Activated T-helper 1 cell treated with anti-CD3 and anti-CD28 coated beads, Interleukin-12 subunit alpha, Interleukin-12 subunit beta, Interleukin-2, Interleukin-4 antibody, amounts not matched to agents 30 ng/mL and 10 ng/mL and 1 ng/mL, durations not matched to agents 14 hours and 24 hours and 36 hours (primary cell): ENCODE measurements at regions of chr5 and their contacts with region 1.

Region 1: GRCh38 chr5:151223469-151224264 is at the start of gene CCDC69:
- DNase-seq: peak; percentile 43
- H3K4me3 Mint-ChIP-seq: peak within 1 kb of the TSS; percentile 77
- H3K27ac Mint-ChIP-seq: peak within 1 kb of the TSS; percentile 78
- H3K4me1 Mint-ChIP-seq: peaks cover 49% of the 10 kb centered on the region
- H3K27me3 Mint-ChIP-seq: no peaks in the 10 kb centered on the region
- total RNA-seq, gene CCDC69: 24.3 and 25.4 TPM in 2 replicates

Region 2: DNA sequence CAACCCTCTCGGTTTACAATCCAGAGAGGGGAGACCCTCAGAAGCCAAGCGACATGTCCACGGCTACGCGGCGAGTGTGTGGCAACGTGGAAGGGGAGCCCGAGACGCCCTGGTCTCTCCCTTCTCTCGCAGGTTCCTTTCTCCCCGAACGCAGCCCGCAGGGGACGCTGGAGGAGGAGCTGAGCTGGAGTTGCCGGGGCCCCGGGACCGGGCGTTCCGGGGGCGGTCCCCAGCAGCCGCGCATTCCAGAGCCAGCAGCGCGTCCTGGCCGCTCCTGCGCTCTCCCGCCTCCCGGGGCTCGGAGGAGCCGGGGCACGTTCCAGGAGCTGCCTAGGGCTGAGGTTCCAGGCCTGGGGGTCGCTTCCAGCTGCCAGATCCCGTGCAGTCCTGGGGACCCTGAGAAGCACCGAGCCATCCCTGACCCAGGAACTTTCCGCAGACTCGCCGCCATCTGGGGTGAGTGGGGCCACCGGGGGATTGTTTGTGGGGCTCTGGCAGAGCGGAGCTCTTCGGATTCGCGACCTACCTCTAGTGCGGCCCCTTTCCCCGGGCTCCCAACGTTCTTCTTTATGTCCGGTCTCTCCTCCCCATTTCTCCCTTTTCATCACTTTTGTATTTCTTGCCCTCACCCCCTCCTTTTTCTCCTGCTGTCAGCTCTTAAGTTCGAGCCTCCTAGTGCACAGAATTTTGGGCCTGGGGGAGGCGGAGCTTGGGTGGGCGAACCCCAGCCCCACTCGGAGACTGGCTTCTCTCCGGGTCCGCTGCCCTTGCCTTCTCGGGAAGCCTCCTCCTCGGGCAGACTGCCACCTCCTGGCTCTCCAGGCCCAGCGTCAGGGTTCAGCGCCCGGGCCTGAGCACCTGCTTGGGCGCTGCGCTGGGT is 444.9 kb before region 1 on chr5 and contains the start of gene SMIM3:
- intact Hi-C with region 1: no loop called
- DNase-seq: peak; percentile 53
- H3K4me3 Mint-ChIP-seq: peak within 1 kb of the TSS; percentile 100
- H3K27ac Mint-ChIP-seq: peak within 1 kb of the TSS; percentile 83
- H3K4me1 Mint-ChIP-seq: peaks cover 62% of the 10 kb centered on the region
- H3K27me3 Mint-ChIP-seq: peaks cover 2% of the 10 kb centered on the region
- total RNA-seq, gene SMIM3: 12.8 and 13.4 TPM in 2 replicates

Region 3: GRCh38 chr5:151005950-151006576 is 217.6 kb before region 1 on chr5:
- intact Hi-C with region 1: no loop called
- DNase-seq: no peak
- H3K4me3 Mint-ChIP-seq: no peak overlapping the region
- H3K27ac Mint-ChIP-seq: no peak overlapping the region
- H3K4me1 Mint-ChIP-seq: no peaks in the 10 kb centered on the region
- H3K27me3 Mint-ChIP-seq: peaks cover 3% of the 10 kb centered on the region

Region 4: GRCh38 chr5:151239237-151239861 is 15.7 kb after region 1 on chr5:
- intact Hi-C with region 1: loop called (anchors 1 kb)
- DNase-seq: no peak
- H3K4me3 Mint-ChIP-seq: no peak overlapping the region
- H3K27ac Mint-ChIP-seq: no peak overlapping the region
- H3K4me1 Mint-ChIP-seq: peaks cover 41% of the 10 kb centered on the region
- H3K27me3 Mint-ChIP-seq: no peaks in the 10 kb centered on the region

Region 5: DNA sequence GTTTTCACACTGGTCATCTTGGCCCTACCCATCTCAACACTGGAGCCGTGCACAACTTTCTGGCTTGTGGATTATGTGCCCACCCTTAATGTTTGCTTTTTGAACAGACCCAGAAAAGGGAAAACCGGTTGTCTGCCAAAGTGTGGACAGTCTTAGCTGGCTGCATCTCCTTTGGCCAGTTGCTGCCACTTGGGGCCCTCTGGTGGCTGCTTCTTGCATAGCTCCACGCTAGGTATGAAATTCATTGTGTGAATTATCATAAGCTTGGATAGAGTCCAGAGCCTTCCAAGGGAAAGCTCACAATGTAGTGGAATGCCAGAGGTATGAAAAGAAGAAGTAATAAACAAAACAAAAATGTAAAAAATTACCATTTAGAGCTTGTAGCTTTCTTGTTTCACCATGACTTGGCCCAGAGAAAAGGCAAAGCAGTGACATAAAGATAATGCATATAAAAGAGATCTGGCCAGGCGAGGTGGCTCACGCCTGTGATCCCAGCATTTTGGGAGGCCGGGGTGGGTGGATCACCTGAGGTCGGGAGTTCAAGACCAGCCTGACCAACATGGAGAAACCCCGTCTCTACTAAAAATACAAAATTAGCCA is 92.4 kb after region 1 on chr5:
- intact Hi-C with region 1: loop called (anchors 5 kb)
- DNase-seq: peak; percentile 17
- H3K4me3 Mint-ChIP-seq: no peak overlapping the region
- H3K27ac Mint-ChIP-seq: no peak overlapping the region
- H3K4me1 Mint-ChIP-seq: no peaks in the 10 kb centered on the region
- H3K27me3 Mint-ChIP-seq: peaks cover 10% of the 10 kb centered on the region

Region 6: DNA sequence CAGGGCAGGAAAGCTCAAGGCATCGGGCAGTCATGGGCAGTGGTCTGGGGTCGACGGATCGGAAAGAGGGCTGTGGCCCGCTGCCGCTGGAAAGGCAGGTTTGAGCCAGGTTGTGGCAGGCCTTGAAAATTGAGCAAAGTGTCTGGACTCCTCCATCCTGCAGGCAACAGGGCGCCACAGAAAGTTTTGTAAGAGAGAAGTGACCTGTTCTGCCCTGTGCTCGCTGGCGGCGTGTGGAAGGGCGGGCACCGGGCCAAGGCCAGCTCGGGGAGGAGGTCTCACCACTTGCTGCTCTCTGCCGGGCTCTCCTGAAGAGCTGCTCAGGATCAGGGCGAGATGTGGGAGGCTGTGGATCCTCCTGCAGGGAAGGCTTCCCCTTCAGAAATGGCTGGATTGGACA is 408.9 kb after region 1 on chr5:
- intact Hi-C with region 1: no loop called
- DNase-seq: no peak
- H3K4me3 Mint-ChIP-seq: no peak overlapping the region
- H3K27ac Mint-ChIP-seq: no peak overlapping the region
- H3K4me1 Mint-ChIP-seq: no peaks in the 10 kb centered on the region
- H3K27me3 Mint-ChIP-seq: peaks cover 10% of the 10 kb centered on the region